OCI-LY7 (cell line): ENCODE measurements at regions of chr9 and their contacts with region 1.

Region 1: GRCh38 chr9:120755827-120756434 is 37.3 kb downstream of the FBXW2 start:
- DNase-seq: peak; percentile 79
- H3K4me3 ChIP-seq: no peak overlapping the region
- H3K27ac ChIP-seq: peak overlapping the region; percentile 34
- H3K4me1 ChIP-seq: peaks cover 32% of the 10 kb centered on the region
- CTCF ChIP-seq: peak; percentile 95

Region 2: GRCh38 chr9:120490888-120491595 is 264.9 kb before region 1 on chr9:
- CTCF ChIA-PET with region 1: no interaction called
- POLR2A ChIA-PET with region 1: no interaction called
- intact Hi-C with region 1: no loop called
- DNase-seq: no peak
- H3K4me3 ChIP-seq: no peak overlapping the region
- H3K27ac ChIP-seq: no peak overlapping the region
- H3K4me1 ChIP-seq: no peaks in the 10 kb centered on the region
- CTCF ChIP-seq: no peak

Region 3: DNA sequence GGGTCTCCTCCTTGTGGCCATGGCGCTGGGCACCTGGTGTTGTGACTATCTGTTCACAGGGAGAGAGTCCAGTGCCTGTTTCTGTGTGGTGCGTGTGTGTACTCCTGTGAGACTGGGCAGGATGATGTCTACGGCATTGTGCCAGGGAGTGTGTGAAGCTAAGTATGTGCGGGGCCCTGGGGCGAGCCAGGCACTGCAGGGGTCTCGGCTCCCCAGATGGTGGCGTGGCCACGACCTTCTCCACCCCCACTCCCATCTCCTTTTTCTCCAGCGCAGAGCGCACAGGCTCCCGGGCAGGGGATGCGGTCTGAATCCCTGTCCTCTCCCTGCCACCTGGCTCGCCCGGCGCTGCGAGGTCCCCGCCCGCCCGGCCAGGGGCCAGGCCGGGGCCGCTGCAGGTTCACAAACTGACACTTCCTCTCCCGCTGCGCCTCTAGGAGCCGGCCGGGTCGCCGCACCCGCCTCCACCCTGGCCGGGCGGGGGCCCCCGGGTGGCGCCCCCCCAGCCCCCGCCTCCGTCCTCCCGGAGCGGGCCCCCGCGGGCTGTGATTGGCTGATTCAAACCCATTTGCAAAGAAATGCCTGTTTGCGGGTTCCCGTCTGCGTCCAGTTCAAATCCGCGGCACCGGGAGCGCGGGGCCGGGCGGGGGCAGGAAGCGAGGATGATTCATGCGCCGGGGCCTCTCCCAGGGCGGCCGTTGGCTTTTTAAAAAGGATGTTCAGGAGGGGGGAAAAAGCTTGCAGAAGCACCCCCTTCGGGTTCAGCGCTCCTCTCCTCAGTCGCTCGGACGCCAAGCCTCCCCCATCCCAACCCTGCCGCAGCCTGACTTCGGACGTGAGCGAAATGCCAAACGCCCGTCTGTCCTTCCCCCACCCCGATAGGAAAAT is 120.3 kb after region 1 on chr9:
- CTCF ChIA-PET with region 1: no interaction called
- POLR2A ChIA-PET with region 1: no interaction called
- intact Hi-C with region 1: loop called (anchors 1 kb)
- DNase-seq: peak; percentile 95
- H3K4me3 ChIP-seq: peak overlapping the region; percentile 93
- H3K27ac ChIP-seq: peak overlapping the region; percentile 96
- H3K4me1 ChIP-seq: peaks cover 70% of the 10 kb centered on the region
- CTCF ChIP-seq: peak; percentile 58

Region 4: DNA sequence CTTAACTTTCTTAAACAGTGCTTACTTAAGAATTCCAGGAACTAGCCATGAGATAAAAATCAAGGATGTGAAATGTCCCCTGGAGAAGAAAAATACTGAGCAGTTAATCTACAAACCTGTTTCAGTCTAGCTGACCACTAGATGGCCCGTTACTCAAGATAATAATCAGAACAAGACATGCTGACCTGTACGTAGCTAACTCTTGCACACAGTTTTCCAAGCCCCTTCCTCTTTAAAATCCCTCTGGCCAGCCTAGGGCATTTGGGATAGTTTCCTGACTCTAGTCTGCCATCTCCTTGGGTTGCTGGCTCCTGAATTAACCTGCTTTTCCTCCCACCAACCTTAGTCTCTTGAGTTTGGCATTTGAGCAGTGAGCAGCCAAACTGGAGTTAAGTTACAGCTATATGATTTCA is 229.9 kb after region 1 on chr9:
- CTCF ChIA-PET with region 1: no interaction called
- POLR2A ChIA-PET with region 1: interaction called, 3 read pairs
- intact Hi-C with region 1: loop called (anchors 2 kb)
- DNase-seq: peak; percentile 76
- H3K4me3 ChIP-seq: no peak overlapping the region
- H3K27ac ChIP-seq: no peak overlapping the region
- H3K4me1 ChIP-seq: no peaks in the 10 kb centered on the region
- CTCF ChIP-seq: peak; percentile 89

Region 5: GRCh38 chr9:121201738-121202533 is 446.0 kb after region 1 on chr9 and contains the start of gene RAB14:
- CTCF ChIA-PET with region 1: no interaction called
- POLR2A ChIA-PET with region 1: no interaction called
- intact Hi-C with region 1: loop called (anchors 10 kb)
- DNase-seq: peak; percentile 99
- H3K4me3 ChIP-seq: peak within 1 kb of the TSS; percentile 99
- H3K27ac ChIP-seq: peak within 1 kb of the TSS; percentile 81
- H3K4me1 ChIP-seq: peaks cover 58% of the 10 kb centered on the region
- CTCF ChIP-seq: peak; percentile 83
- total RNA-seq, gene RAB14: 8.1 and 8.6 TPM in 2 replicates

Region 6: GRCh38 chr9:121399883-121400607 is 644.1 kb after region 1 on chr9:
- CTCF ChIA-PET with region 1: no interaction called
- POLR2A ChIA-PET with region 1: no interaction called
- intact Hi-C with region 1: loop called (anchors 5 kb)
- DNase-seq: peak; percentile 75
- H3K4me3 ChIP-seq: no peak overlapping the region
- H3K27ac ChIP-seq: no peak overlapping the region
- H3K4me1 ChIP-seq: no peaks in the 10 kb centered on the region
- CTCF ChIP-seq: peak; percentile 88